CD8-positive, alpha-beta T cell (primary cell): ENCODE measurements at regions of chr2 and their contacts with region 1.

Region 1: DNA sequence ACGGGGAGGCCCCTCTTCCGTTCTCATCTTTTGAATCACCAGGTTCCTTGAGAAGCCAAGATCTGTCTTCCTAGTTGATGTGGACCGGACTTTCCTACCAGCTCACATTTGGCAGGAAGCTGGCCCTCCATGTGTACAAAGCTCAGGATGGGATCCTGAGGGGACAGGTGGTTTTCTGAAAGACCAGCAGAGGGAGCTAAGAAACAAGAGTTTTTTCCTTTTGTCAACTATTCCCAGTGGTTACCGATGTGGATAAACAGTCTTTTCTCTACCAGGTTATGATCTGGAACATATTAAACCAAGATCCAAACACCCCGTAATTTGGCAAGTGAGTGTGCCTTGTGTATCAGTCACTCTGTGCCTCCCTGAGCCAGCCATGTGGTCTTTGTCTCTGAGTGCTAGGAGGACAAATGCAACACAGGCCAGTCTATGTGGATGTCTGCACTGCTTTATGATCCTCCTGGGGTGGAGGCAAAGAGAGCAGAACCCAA is 25.1 kb upstream of the ARHGAP25 start:
- DNase-seq: peak in 2 of 9 experiments; percentile 50 to 62
- ATAC-seq: peak; percentile 58
- H3K4me3 ChIP-seq: no peak overlapping the region
- H3K4me3 Mint-ChIP-seq: no peak overlapping the region
- H3K27ac ChIP-seq: no peak overlapping the region
- H3K27ac Mint-ChIP-seq: no peak overlapping the region
- H3K4me1 ChIP-seq: no peaks in the 10 kb centered on the region
- H3K4me1 Mint-ChIP-seq: peaks cover 8% of the 10 kb centered on the region
- H3K27me3 ChIP-seq: no peaks in the 10 kb centered on the region
- H3K27me3 Mint-ChIP-seq: no peaks in the 10 kb centered on the region
- CTCF ChIP-seq: peak; percentile 76

Region 2: DNA sequence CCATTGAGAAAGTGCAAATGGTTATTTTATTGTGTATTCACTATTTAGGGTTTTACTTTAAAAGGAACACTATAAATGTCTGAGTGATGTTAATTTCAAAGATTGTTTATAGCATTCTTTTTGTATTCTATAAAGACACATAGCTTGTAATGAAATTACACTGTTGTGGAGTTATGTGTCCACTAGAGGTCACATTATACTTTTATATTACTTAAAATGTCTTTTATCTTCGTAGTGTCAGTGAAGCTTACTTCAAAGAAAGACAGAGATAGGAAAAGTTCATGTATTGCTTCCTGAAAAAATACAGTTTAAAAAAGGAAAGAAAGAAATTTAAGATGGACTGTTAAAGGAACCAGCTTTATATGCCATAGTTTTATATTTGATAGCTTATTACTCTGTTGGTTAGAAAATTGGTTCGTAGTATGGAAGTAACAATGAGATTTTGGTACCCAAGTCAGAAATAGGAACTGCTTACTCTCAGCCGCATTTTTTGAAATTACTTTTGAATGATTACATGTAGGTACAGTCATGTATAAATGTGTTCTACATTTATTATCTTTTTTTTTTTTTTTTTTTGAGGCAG is 221.6 kb before region 1 on chr2:
- CTCF ChIA-PET with region 1: interaction called, 12 read pairs
- POLR2A ChIA-PET with region 1: no interaction called
- intact Hi-C with region 1: no loop called
- DNase-seq: peak in 2 of 9 experiments; percentile 36 to 54
- ATAC-seq: peak; percentile 71
- H3K4me3 ChIP-seq: no peak overlapping the region
- H3K4me3 Mint-ChIP-seq: no peak overlapping the region
- H3K27ac ChIP-seq: no peak overlapping the region
- H3K27ac Mint-ChIP-seq: no peak overlapping the region
- H3K4me1 ChIP-seq: no peaks in the 10 kb centered on the region
- H3K4me1 Mint-ChIP-seq: peaks cover 3% of the 10 kb centered on the region
- H3K27me3 ChIP-seq: no peaks in the 10 kb centered on the region
- H3K27me3 Mint-ChIP-seq: no peaks in the 10 kb centered on the region
- CTCF ChIP-seq: peak; percentile 65

Region 3: GRCh38 chr2:68721482-68722101 is 12.1 kb after region 1 on chr2:
- CTCF ChIA-PET with region 1: interaction called, 70 read pairs
- POLR2A ChIA-PET with region 1: interaction called, 3 read pairs
- intact Hi-C with region 1: no loop called
- DNase-seq: peak in 7 of 9 experiments; percentile 16 to 76 (median 46)
- ATAC-seq: peak; percentile 73
- H3K4me3 ChIP-seq: peak overlapping the region in 1 of 2 experiments; percentile 4
- H3K4me3 Mint-ChIP-seq: peak overlapping the region; percentile 72
- H3K27ac ChIP-seq: peak overlapping the region in 1 of 2 experiments; percentile 63
- H3K27ac Mint-ChIP-seq: peak overlapping the region; percentile 87
- H3K4me1 ChIP-seq: peaks cover 71% of the 10 kb centered on the region
- H3K4me1 Mint-ChIP-seq: peaks cover 82% of the 10 kb centered on the region
- H3K27me3 ChIP-seq: no peaks in the 10 kb centered on the region
- H3K27me3 Mint-ChIP-seq: no peaks in the 10 kb centered on the region
- CTCF ChIP-seq: no peak

Region 4: GRCh38 chr2:68734688-68735525 is 25.4 kb after region 1 on chr2 and contains the start of gene ARHGAP25:
- CTCF ChIA-PET with region 1: interaction called, 21 read pairs
- POLR2A ChIA-PET with region 1: interaction called, 3 read pairs
- intact Hi-C with region 1: no loop called
- DNase-seq: peak in 7 of 9 experiments; percentile 25 to 83 (median 61)
- ATAC-seq: peak; percentile 65
- H3K4me3 ChIP-seq: peak within 1 kb of the TSS; percentile 61 to 84
- H3K4me3 Mint-ChIP-seq: no peak within 1 kb of the TSS
- H3K27ac ChIP-seq: peak within 1 kb of the TSS; percentile 62 to 81
- H3K27ac Mint-ChIP-seq: no peak within 1 kb of the TSS
- H3K4me1 ChIP-seq: peaks cover 41% of the 10 kb centered on the region
- H3K4me1 Mint-ChIP-seq: peaks cover 38% of the 10 kb centered on the region
- H3K27me3 ChIP-seq: no peaks in the 10 kb centered on the region
- H3K27me3 Mint-ChIP-seq: no peaks in the 10 kb centered on the region
- CTCF ChIP-seq: no peak
- total RNA-seq, gene ARHGAP25: 35.8 to 36.7 TPM

Region 5: DNA sequence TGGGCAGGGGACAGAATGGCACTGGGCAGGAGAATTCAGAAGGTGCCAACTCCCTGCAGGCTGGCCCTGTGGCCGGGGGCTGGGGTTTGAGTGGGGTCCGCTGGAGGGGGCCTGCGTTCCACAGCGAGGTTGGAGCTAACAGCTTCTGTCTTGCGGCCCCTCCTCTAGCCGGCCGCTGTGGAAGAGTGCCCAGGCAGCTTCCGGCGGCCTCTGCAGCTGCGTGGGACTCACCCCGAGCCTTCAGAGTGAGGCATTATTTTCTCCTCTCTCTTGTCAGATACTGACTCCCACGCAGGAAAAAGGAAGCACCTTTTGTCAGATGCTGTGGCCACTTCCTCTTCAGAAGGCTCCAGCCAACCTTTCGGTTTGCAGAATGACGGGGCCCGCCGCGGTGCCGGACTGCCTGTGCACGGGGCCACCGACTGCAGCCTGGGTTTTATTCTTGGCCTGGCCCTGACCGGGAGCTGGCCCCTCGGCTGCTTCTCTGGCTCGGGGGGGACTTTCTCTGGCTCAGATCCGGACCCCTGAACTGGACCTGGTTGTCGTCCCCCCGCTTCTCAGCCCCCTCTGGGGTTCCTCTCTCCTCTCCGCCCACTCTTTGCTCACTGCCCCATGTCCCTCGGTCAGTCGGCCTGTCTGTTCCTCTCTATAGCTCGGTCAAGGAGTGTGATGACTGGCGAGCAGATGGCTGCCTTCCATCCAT is 65.3 kb after region 1 on chr2:
- CTCF ChIA-PET with region 1: interaction called, 10 read pairs
- POLR2A ChIA-PET with region 1: no interaction called
- intact Hi-C with region 1: no loop called
- DNase-seq: peak; percentile 15 to 84 (median 58)
- ATAC-seq: peak; percentile 38
- H3K4me3 ChIP-seq: peak overlapping the region; percentile 61 to 85
- H3K4me3 Mint-ChIP-seq: peak overlapping the region; percentile 84
- H3K27ac ChIP-seq: peak overlapping the region; percentile 64 to 88
- H3K27ac Mint-ChIP-seq: peak overlapping the region; percentile 100
- H3K4me1 ChIP-seq: peaks cover 81% of the 10 kb centered on the region
- H3K4me1 Mint-ChIP-seq: peaks cover 89% of the 10 kb centered on the region
- H3K27me3 ChIP-seq: no peaks in the 10 kb centered on the region
- H3K27me3 Mint-ChIP-seq: no peaks in the 10 kb centered on the region
- CTCF ChIP-seq: no peak

Region 6: DNA sequence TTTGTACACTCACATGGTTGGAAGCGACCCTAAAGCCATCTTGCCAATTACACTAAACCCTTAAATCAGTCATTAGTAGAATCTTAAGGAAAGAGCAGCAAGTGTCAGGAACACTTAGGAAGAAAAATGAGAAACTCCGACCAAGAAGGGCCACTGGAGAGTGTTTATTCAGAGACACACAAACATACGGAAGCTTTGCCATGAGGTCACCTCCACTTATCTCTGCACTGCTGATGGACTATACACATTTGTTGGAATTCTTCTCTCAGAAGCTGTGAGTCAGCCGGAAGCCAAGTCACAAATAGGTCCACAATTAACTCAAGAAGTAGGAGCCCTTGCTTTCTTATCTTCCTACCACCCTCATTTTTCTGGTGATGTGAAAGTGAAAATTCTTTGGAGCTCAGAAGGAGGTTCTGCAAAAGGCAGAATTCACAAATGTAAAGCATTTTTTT is 140.1 kb after region 1 on chr2:
- CTCF ChIA-PET with region 1: interaction called, 21 read pairs
- POLR2A ChIA-PET with region 1: interaction called, 3 read pairs
- intact Hi-C with region 1: no loop called
- DNase-seq: no peak
- ATAC-seq: no peak
- H3K4me3 ChIP-seq: no peak overlapping the region
- H3K4me3 Mint-ChIP-seq: no peak overlapping the region
- H3K27ac ChIP-seq: no peak overlapping the region
- H3K27ac Mint-ChIP-seq: no peak overlapping the region
- H3K4me1 ChIP-seq: no peaks in the 10 kb centered on the region
- H3K4me1 Mint-ChIP-seq: no peaks in the 10 kb centered on the region
- H3K27me3 ChIP-seq: no peaks in the 10 kb centered on the region
- H3K27me3 Mint-ChIP-seq: peaks cover 8% of the 10 kb centered on the region
- CTCF ChIP-seq: no peak

Region 7: GRCh38 chr2:68918497-68918896 is 209.0 kb after region 1 on chr2:
- CTCF ChIA-PET with region 1: interaction called, 20 read pairs
- POLR2A ChIA-PET with region 1: no interaction called
- intact Hi-C with region 1: no loop called
- DNase-seq: no peak
- ATAC-seq: no peak
- H3K4me3 ChIP-seq: no peak overlapping the region
- H3K4me3 Mint-ChIP-seq: no peak overlapping the region
- H3K27ac ChIP-seq: no peak overlapping the region
- H3K27ac Mint-ChIP-seq: no peak overlapping the region
- H3K4me1 ChIP-seq: no peaks in the 10 kb centered on the region
- H3K4me1 Mint-ChIP-seq: no peaks in the 10 kb centered on the region
- H3K27me3 ChIP-seq: no peaks in the 10 kb centered on the region
- H3K27me3 Mint-ChIP-seq: no peaks in the 10 kb centered on the region
- CTCF ChIP-seq: no peak